ENCODE measurements at regions of chr2 and their contacts with region 1.

Region 1: GRCh38 chr2:97806738-97807618 is 93.6 kb downstream of the ZAP70 start:
- DNase-seq: peak; percentile 74 to 88
- H3K4me3 ChIP-seq: no peak overlapping the region
- H3K4me1 ChIP-seq: 0 out of 2 replicates have a peak, but pooled peaks cover 4% of the 10 kb centered on the region
- H3K27me3 ChIP-seq: no peaks in the 10 kb centered on the region

Region 2: DNA sequence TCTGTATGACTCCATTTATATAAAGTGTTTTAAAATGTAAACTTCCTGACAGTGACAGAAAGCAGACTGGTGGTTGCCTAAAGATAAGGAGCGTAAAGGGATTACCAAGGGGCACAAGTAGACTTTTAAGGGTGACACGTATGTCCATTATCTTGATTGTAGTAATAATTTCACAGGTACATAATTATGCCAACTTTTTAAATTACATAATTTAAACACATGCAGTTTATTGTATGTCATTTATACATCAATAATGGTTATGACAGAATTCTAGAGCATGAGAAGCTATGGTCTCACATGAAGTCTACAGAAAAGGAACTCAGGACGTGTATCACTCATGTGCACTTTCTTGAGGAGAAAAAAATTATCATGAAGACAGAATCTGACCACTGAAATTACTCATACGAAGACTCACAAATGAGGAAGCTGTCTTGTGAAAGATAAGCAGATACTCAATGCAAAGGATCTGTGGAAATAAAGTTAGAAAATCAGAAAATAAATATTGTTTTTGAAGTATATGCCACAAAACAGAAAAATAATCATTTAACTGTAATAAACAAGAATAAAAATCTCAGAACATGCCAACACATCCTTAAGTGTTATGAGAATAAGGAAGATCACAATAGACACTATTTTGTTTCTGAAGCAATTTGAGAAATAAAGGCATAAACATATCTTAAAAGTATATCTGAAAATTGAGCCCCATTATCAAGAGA is 104.4 kb after region 1 on chr2:
- in situ Hi-C with region 1: no loop called
- DNase-seq: no peak
- H3K4me3 ChIP-seq: no peak overlapping the region
- H3K4me1 ChIP-seq: no peaks in the 10 kb centered on the region
- H3K27me3 ChIP-seq: no peaks in the 10 kb centered on the region

Region 3: GRCh38 chr2:98269830-98270229 is 462.9 kb after region 1 on chr2:
- in situ Hi-C with region 1: loop called (anchors 10 kb)
- DNase-seq: no peak
- H3K4me3 ChIP-seq: no peak overlapping the region
- H3K4me1 ChIP-seq: no peaks in the 10 kb centered on the region
- H3K27me3 ChIP-seq: no peaks in the 10 kb centered on the region

Region 4: GRCh38 chr2:98324181-98324580 is 517.2 kb after region 1 on chr2:
- in situ Hi-C with region 1: no loop called
- DNase-seq: no peak
- H3K4me3 ChIP-seq: no peak overlapping the region
- H3K4me1 ChIP-seq: no peaks in the 10 kb centered on the region
- H3K27me3 ChIP-seq: no peaks in the 10 kb centered on the region

Region 5: GRCh38 chr2:98369710-98370239 is 562.8 kb after region 1 on chr2:
- in situ Hi-C with region 1: no loop called
- DNase-seq: no peak
- H3K4me3 ChIP-seq: no peak overlapping the region
- H3K4me1 ChIP-seq: no peaks in the 10 kb centered on the region
- H3K27me3 ChIP-seq: no peaks in the 10 kb centered on the region

Region 6: GRCh38 chr2:98379672-98380535 is 572.9 kb after region 1 on chr2:
- in situ Hi-C with region 1: loop called (anchors 5 kb)
- DNase-seq: peak; percentile 57 to 62
- H3K4me3 ChIP-seq: no peak overlapping the region
- H3K4me1 ChIP-seq: peaks cover 8% of the 10 kb centered on the region
- H3K27me3 ChIP-seq: no peaks in the 10 kb centered on the region

Measured in HAP-1 (cell line).